Heart right ventricle (tissue), 16 donors: ENCODE measurements at regions of chr17 and their contacts with region 1.

Region 1: DNA sequence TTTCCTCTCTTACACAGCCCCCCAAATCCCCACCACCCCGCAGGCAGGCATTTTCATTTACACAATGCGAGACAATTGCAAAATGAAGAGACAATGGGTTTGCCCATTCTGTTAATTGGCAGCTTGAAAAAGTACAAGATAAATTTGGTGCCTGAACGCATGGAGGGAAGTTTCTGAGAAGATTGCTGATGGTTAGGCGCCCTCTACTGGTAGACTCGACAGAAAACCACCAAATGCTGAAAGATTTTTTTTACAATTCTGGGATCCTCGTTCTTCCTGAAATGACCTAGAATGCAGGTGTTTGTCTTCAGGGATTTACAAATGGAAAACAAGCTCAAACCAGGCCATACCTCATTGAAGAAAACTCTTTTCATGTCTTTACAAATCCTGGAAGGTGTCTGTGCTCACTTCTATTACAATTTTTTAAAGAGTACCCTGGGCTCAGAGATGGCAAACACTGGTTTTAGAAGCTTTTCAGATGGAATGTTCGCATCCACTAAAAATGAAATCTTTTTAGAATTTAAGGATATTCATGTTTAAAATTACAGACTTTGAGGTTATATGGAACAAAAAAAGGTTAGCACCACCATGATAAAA is 338.5 kb downstream of the PMP22 start:
- DNase-seq: peak in 1 of 2 donors; percentile 52
- ATAC-seq: no peak
- H3K4me3 ChIP-seq: no peak overlapping the region
- H3K27ac ChIP-seq: no peak overlapping the region
- H3K4me1 ChIP-seq: no peaks in the 10 kb centered on the region
- H3K27me3 ChIP-seq: peaks cover 0 to 12% (median 0%) of the 10 kb centered on the region in 7 donors
- CTCF ChIP-seq: peak; percentile 57 to 84 (median 81)

Region 2: GRCh38 chr17:13337864-13338371 is 1588.7 kb before region 1 on chr17:
- intact Hi-C with region 1: loop called in 2 of 10 experiments (anchors 10 kb)
- DNase-seq: peak in 1 of 2 donors; percentile 29
- ATAC-seq: peak in 4 of 8 donors; percentile 47 to 67 (median 58)
- H3K4me3 ChIP-seq: peak overlapping the region in 8 of 10 donors; percentile 6 to 49 (median 40)
- H3K27ac ChIP-seq: no peak overlapping the region
- H3K4me1 ChIP-seq: peaks cover 0 to 6% (median 0%) of the 10 kb centered on the region in 9 donors
- H3K27me3 ChIP-seq: peaks cover 0 to 28% (median 0%) of the 10 kb centered on the region in 7 donors
- CTCF ChIP-seq: peak; percentile 47 to 82 (median 70)

Region 3: GRCh38 chr17:14211801-14212200 is 714.8 kb before region 1 on chr17:
- intact Hi-C with region 1: loop called in 2 of 10 experiments (anchors 5 to 10 kb)
- DNase-seq: peak in 1 of 2 donors; percentile 33
- ATAC-seq: peak in 3 of 8 donors; percentile 29 to 42 (median 38)
- H3K4me3 ChIP-seq: no peak overlapping the region
- H3K27ac ChIP-seq: no peak overlapping the region
- H3K4me1 ChIP-seq: peaks cover 0 to 4% (median 0%) of the 10 kb centered on the region in 9 donors
- H3K27me3 ChIP-seq: no peaks in the 10 kb centered on the region
- CTCF ChIP-seq: peak; percentile 16 to 63 (median 48)

Region 4: DNA sequence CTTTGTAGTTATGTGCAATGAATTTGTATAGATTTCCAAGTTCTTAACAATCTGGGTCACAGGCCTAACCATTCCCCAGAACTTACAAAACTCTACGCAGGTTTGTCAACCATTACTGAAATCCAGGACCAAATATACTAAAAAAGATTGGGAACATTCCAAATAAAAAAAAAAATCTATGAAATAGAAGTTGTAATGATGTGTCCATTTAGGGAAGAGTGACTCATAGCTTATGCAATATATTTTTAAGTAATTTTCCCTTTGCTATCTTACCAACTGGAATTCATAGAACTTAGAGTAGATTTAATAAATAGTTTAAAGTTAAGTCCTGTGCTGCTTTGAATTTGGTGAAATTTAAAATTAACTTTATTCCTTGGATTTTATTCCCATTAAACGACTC is 54.7 kb before region 1 on chr17:
- intact Hi-C with region 1: no loop called
- DNase-seq: no peak
- ATAC-seq: no peak
- H3K4me3 ChIP-seq: no peak overlapping the region
- H3K27ac ChIP-seq: no peak overlapping the region
- H3K4me1 ChIP-seq: no peaks in the 10 kb centered on the region
- H3K27me3 ChIP-seq: no peaks in the 10 kb centered on the region
- CTCF ChIP-seq: no peak

Region 5: DNA sequence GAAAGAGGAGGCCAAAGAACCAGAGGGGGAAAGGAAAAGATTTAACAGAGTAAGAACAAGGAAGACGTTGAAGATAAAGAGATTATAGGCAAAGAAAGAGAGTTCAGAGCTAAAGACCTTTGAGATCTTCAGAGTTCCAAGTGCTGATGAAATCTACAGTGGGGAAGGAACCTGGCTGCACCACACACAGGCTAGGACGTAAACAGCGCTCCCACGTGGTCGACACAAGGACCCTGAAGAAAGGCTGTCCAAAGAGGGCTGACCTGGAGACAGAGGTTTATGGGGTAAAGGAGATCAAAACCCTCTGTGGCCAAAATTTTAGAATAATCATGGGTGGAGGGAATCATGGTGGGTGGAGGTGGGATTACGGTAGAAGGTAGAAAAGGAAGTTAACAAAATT is 216.9 kb after region 1 on chr17:
- intact Hi-C with region 1: loop called in 1 of 10 experiments (anchors 10 kb)
- DNase-seq: no peak
- ATAC-seq: no peak
- H3K4me3 ChIP-seq: no peak overlapping the region
- H3K27ac ChIP-seq: no peak overlapping the region
- H3K4me1 ChIP-seq: no peaks in the 10 kb centered on the region
- H3K27me3 ChIP-seq: no peaks in the 10 kb centered on the region
- CTCF ChIP-seq: no peak